Mammary epithelial cell (primary cell): ENCODE measurements at regions of chr2 and their contacts with region 1.

Region 1: GRCh38 chr2:62038975-62039771 is 133.7 kb downstream of the COMMD1 start:
- DNase-seq: peak; percentile 93
- H3K4me3 ChIP-seq: no peak overlapping the region
- H3K27ac ChIP-seq: peak overlapping the region; percentile 53
- H3K4me1 ChIP-seq: peaks cover 31% of the 10 kb centered on the region
- H3K27me3 ChIP-seq: no peaks in the 10 kb centered on the region
- CTCF ChIP-seq: no peak

Region 2: GRCh38 chr2:61888267-61889055 is 150.7 kb before region 1 on chr2 and contains the start of gene CCT4:
- CTCF ChIA-PET with region 1: no interaction called
- dilution Hi-C with region 1: no loop called
- in situ Hi-C with region 1: no loop called
- intact Hi-C with region 1: no loop called
- DNase-seq: peak; percentile 80
- H3K4me3 ChIP-seq: peak within 1 kb of the TSS; percentile 83 to 97 (median 94)
- H3K27ac ChIP-seq: peak within 1 kb of the TSS; percentile 96
- H3K4me1 ChIP-seq: peaks cover 17% of the 10 kb centered on the region
- H3K27me3 ChIP-seq: no peaks in the 10 kb centered on the region
- CTCF ChIP-seq: no peak
- total RNA-seq, gene CCT4: 117 to 205 TPM

Region 3: DNA sequence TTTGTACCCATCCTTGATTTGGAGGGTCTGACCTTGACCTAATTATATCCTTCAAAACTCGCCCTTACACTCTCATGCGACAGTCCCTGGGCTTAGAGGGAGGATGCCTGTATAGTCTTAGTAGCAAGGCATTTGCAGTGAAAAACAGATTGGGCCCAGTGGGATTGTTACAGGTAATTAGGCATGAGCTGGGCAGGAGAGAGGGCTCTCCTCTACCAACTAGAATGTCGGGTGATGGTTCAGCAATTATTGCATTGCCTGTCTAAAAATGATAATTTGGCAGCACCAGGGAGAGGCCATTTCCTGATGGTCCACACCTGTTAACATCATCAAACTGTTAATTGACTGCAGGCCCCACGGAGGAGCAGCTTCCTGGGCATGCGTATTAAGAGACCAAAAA is 101.3 kb before region 1 on chr2:
- CTCF ChIA-PET with region 1: no interaction called
- dilution Hi-C with region 1: no loop called
- in situ Hi-C with region 1: no loop called
- intact Hi-C with region 1: no loop called
- DNase-seq: no peak
- H3K4me3 ChIP-seq: no peak overlapping the region
- H3K27ac ChIP-seq: no peak overlapping the region
- H3K4me1 ChIP-seq: no peaks in the 10 kb centered on the region
- H3K27me3 ChIP-seq: no peaks in the 10 kb centered on the region
- CTCF ChIP-seq: no peak

Region 4: GRCh38 chr2:61962095-61962984 is 76.8 kb before region 1 on chr2:
- CTCF ChIA-PET with region 1: no interaction called
- dilution Hi-C with region 1: loop called (anchors 5 kb)
- in situ Hi-C with region 1: no loop called
- intact Hi-C with region 1: no loop called
- DNase-seq: no peak
- H3K4me3 ChIP-seq: no peak overlapping the region
- H3K27ac ChIP-seq: no peak overlapping the region
- H3K4me1 ChIP-seq: peaks cover 7% of the 10 kb centered on the region
- H3K27me3 ChIP-seq: no peaks in the 10 kb centered on the region
- CTCF ChIP-seq: no peak